Ascending aorta (tissue), 2 donors: ENCODE measurements at regions of chr14 and their contacts with region 1.

Region 1: DNA sequence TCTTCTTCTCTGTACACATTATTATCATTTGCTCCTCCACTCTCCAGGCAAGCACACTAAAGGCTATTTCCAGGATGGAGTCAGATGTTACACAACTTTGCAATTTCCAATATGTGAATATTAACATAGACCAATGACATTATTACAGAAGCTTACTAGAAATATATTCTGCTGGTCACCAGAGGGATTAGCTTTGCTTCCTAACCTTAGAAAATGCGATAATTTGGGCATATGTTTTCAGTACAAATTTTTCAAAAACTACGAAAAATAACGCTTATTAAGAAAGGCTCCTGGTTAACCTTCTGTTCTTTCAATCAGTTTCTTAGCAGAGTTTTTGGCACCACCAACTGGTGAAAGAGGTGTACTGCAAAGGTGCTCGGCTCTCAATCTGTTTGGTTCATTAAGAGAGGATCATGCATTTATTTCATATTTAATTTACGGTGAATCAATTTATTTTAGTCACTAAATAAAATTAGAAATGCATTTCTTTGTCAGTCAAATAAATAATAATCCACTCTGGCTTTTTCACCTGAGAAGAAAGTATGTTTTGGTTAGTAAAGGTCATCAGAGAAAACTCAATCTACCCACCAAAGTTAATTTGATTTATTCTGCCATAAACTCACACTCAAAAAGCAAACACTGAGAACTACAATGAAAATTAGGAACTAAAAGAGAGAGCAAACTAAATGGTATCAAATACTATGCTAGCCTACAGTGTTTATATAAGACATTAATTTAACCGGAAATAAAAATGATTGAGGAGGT is 39.2 kb downstream of the EFCAB11 start:
- DNase-seq: peak in 1 of 2 donors; percentile 81
- H3K4me3 ChIP-seq: no peak overlapping the region
- H3K27ac ChIP-seq: no peak overlapping the region
- H3K4me1 ChIP-seq: peaks cover 0 to 23% of the 10 kb centered on the region in 2 donors
- H3K27me3 ChIP-seq: no peaks in the 10 kb centered on the region
- CTCF ChIP-seq: peak; percentile 79 to 98 (median 95)

Region 2: DNA sequence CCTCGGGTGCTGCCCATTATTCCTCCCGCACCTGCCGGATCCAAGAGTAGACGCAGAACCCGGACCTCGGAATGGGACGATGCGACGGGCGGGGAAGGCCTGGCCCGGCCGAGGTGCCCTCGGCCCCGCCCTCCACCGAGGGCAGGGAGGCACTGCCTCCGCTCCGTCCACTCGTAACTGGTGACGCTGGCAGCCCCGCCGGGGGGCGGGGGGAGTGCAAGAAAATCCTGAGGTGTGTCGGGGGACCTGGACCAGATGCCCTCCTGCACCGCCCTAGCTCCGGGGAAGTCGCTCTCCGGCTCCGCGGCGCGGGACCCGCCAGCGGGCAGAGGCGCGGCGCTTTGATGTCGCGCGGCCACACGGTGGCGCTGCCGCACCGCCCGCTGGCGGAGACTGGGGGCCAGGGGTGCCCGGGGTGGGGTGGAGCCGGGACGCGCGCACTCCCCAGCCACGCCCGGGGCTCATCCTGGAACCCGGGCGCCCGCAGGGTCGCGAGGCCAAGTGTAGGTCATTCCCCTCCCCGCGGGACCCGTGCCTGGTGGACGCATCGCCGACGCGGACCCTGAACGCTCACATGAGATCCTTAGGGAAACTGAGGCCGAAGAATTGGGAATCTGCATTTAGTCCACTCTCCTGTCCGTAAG is 888.1 kb before region 1 on chr14:
- intact Hi-C with region 1: loop called (anchors 1 kb)
- DNase-seq: peak; percentile 39 to 73
- H3K4me3 ChIP-seq: peak overlapping the region; percentile 56 to 78
- H3K27ac ChIP-seq: no peak overlapping the region
- H3K4me1 ChIP-seq: peaks cover 0 to 3% of the 10 kb centered on the region in 2 donors
- H3K27me3 ChIP-seq: peaks cover 2% of the 10 kb centered on the region
- CTCF ChIP-seq: peak; percentile 64 to 96 (median 89)

Region 3: GRCh38 chr14:89178802-89179535 is 736.3 kb before region 1 on chr14:
- intact Hi-C with region 1: loop called (anchors 5 kb)
- DNase-seq: no peak
- H3K4me3 ChIP-seq: no peak overlapping the region
- H3K27ac ChIP-seq: peak overlapping the region; percentile 70 to 76
- H3K4me1 ChIP-seq: peaks cover 5 to 40% of the 10 kb centered on the region in 2 donors
- H3K27me3 ChIP-seq: no peaks in the 10 kb centered on the region
- CTCF ChIP-seq: no peak

Region 4: DNA sequence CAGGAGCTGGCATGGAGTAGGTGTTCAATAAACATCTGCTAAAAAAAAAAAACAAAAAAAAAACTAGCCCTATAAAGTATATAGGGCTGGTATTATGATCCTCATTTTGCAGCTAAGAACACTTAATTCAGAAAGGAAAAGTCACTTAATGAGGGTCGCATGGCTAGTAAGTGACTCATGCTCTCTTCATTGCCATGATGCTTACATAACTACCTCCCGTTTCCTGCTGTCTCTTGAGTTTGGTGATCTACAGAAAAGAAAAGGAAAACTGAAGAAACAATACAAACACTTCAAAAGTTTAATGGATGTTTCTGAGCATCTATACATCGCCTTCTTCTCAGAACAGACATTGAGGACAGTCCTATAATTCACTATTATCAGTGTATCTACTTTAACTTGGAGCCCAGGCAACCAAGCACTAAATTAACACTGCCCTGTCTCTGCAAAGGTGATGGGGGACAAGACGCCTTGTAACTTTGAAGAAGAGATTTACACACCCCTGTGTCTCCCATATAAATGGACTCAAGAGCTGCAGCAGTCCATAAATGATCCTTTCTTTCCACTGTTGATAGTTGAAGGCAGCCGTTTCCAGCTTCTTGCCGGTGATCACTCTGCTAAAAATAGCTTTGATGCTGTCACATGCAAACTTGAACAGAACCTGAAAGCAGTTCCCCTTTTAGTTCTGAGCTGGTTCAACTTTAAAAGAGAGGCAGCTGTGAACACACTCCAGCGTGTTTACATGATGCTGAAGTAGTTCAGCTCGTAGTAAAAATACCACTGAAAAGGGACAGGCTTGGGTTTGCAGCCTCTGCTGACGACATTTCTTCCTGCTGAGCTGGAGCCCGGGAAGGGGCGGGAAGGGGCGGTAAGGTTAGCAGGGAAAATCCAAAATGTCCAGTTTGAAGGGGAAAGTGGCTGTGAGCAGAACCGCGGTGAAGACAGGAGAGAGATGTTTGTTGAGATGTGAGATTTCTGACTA is 611.5 kb before region 1 on chr14:
- intact Hi-C with region 1: loop called (anchors 5 kb)
- DNase-seq: peak; percentile 48 to 89
- H3K4me3 ChIP-seq: peak overlapping the region; percentile 24 to 43
- H3K27ac ChIP-seq: peak overlapping the region; percentile 86 to 91
- H3K4me1 ChIP-seq: peaks cover 13 to 46% of the 10 kb centered on the region in 2 donors
- H3K27me3 ChIP-seq: no peaks in the 10 kb centered on the region
- CTCF ChIP-seq: no peak

Region 5: GRCh38 chr14:89701211-89702043 is 213.9 kb before region 1 on chr14:
- intact Hi-C with region 1: loop called (anchors 2 kb)
- DNase-seq: peak; percentile 49 to 92
- H3K4me3 ChIP-seq: peak overlapping the region; percentile 55 to 76
- H3K27ac ChIP-seq: peak overlapping the region; percentile 61 to 71
- H3K4me1 ChIP-seq: peaks cover 0 to 12% of the 10 kb centered on the region in 2 donors
- H3K27me3 ChIP-seq: no peaks in the 10 kb centered on the region
- CTCF ChIP-seq: no peak

Region 6: DNA sequence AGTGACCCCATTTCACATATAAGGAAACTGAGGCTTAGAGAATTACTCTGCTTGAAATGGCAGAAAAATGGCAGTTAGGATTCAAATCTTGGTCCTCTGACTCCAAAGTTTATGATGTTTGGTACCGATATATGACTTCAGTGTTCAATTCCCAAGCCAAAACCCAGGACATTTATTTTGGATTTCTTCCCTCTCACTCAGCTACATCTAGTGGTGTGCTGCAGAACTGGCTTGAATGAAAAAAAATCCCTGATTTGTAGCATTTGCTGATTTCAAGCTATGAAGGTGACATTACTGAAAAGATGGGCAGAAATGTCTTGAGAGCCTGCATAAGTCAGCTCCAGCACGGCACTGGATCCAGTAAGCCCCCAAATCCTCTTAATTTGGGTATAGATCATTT is 67.1 kb before region 1 on chr14:
- intact Hi-C with region 1: loop called (anchors 5 kb)
- DNase-seq: no peak
- H3K4me3 ChIP-seq: no peak overlapping the region
- H3K27ac ChIP-seq: no peak overlapping the region
- H3K4me1 ChIP-seq: peaks cover 0 to 4% of the 10 kb centered on the region in 2 donors
- H3K27me3 ChIP-seq: no peaks in the 10 kb centered on the region
- CTCF ChIP-seq: peak; percentile 58 to 66 (median 61)

Region 7: GRCh38 chr14:89973234-89973823 is 58.0 kb after region 1 on chr14:
- intact Hi-C with region 1: no loop called
- DNase-seq: no peak
- H3K4me3 ChIP-seq: no peak overlapping the region
- H3K27ac ChIP-seq: peak overlapping the region in 1 of 2 donors; percentile 37
- H3K4me1 ChIP-seq: no peaks in the 10 kb centered on the region
- H3K27me3 ChIP-seq: no peaks in the 10 kb centered on the region
- CTCF ChIP-seq: peak; percentile 46 to 83 (median 77)

Region 8: DNA sequence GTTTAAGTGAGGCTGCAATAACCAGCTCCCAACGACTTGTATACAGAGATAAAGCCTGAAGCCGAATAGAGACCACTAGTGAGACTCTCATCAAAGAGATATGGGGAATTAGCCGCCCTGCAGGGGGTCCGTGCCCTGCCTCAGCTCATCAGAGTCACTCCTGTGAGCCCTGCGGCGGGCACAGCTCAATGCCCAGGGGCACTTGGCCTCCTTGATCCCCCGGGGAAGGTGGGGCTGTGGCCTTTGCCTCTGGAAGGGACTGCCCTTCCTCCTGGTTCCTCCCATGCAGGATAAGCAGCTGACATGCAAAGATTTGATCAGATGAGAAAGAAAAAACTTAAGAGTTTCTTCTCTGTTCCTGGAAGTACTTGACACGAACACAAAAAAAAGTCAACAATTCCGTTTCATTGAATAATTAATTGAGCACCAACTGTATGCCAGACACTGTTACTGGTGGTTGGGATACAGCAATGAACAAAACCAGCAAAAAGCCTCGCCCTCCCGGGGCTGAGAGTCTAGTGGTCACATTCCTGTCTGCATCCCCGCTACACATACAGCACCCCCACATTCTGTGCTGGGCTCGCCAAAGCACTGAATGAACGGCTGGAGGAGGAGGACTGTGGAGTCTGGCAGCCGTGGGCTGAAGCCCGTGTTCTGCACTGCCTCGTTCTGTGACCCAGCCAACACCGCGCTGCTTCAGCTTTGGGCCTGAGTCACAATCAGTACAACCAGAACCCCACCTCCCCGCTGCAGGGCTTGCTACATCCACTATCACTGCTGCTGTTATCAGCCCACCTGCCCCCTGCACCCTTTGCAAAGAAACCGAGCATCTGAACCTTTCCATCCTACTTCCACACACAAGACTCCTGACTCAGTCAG is 890.6 kb after region 1 on chr14:
- intact Hi-C with region 1: no loop called
- DNase-seq: no peak
- H3K4me3 ChIP-seq: no peak overlapping the region
- H3K27ac ChIP-seq: no peak overlapping the region
- H3K4me1 ChIP-seq: peaks cover 2 to 3% of the 10 kb centered on the region in 2 donors
- H3K27me3 ChIP-seq: no peaks in the 10 kb centered on the region
- CTCF ChIP-seq: no peak